Aorta (tissue), 5 donors: ENCODE measurements at regions of chr7 and their contacts with region 1.

Region 1: DNA sequence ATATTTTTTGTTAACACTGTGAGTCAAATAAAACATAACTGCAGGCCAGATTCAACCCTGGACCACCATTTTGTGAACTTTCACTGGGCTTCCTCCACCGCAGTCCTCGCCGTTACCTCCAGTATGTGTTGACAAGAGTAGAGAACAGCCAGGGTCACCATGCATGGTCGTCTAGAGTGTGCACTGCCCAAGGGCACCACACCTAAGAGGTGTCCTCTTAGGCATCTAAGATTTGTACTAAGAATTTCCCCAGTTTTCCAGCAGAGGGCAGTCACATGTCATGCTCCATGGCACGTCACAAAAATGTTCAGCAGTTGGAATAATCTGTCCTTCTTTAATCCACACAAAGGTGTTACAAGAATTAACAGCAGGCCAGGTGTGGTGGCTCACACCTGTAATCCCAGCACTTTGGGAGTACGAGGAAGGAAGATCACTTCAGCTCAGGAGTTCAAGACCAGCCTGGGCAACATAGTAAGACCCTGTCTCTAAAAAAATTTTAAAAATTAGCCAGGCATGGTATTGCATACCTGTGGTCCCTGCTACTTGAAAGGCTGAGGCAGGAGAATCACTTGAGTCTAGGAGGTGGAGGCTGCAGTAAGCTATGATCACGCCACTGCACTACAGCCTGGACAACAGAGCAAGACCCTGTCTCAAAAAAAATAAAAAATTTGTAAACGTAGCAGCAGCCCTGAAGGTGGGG is 71.2 kb upstream of the FOXK1 start:
- DNase-seq: peak in 1 of 2 donors; percentile 60
- ATAC-seq: peak; percentile 85
- H3K4me3 ChIP-seq: no peak overlapping the region
- H3K27ac ChIP-seq: no peak overlapping the region
- H3K4me1 ChIP-seq: no peaks in the 10 kb centered on the region
- H3K27me3 ChIP-seq: no peaks in the 10 kb centered on the region

Region 2: GRCh38 chr7:4631664-4632171 is 20.8 kb after region 1 on chr7:
- intact Hi-C with region 1: loop called (anchors 1 kb)
- DNase-seq: peak; percentile 90
- ATAC-seq: peak; percentile 93
- H3K4me3 ChIP-seq: no peak overlapping the region
- H3K27ac ChIP-seq: no peak overlapping the region
- H3K4me1 ChIP-seq: no peaks in the 10 kb centered on the region
- H3K27me3 ChIP-seq: no peaks in the 10 kb centered on the region